ENCODE measurements at regions of chr5 and their contacts with region 1.

Region 1: DNA sequence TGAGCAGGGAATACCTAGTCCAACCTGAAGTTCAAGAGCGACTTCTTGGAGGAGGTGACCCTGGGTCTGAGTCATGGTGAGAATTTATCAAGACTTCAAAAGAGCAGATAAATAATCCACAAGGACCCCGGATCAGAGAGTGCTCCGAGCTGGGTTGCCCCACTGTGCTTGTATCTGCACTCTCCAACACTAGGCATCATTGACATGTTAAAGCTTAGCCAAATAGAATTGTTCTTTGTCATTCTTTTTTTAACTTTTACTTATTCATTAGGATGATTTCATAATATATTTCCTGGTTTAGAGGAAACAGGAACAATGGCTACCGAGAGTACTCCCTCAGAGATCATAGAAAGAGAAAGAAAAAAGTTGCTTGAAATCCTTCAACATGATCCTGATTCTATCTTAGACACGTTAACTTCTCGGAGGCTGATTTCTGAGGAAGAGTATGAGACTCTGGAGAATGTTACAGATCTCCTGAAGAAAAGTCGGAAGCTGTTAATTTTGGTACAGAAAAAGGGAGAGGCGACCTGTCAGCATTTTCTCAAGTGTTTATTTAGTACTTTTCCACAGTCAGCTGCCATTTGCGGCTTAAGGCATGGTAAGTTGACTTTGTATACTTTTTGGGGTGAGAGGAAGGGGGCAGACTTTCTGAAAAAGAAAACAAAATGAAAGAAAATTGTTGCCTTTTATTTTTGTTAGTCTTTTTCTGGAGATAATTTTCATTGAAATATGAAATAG is at the start of gene CARD6:
- DNase-seq: no peak
- H3K4me3 ChIP-seq: peak within 1 kb of the TSS; percentile 46 to 59
- H3K27ac ChIP-seq: peak within 1 kb of the TSS; percentile 45 to 68
- H3K4me1 ChIP-seq: peaks cover 0 to 2% of the 10 kb centered on the region in 2 donors
- H3K27me3 ChIP-seq: no peaks in the 10 kb centered on the region
- CTCF ChIP-seq: no peak
- total RNA-seq, gene CARD6: 8.2 TPM

Region 2: GRCh38 chr5:40866291-40866690 is 25.1 kb after region 1 on chr5:
- intact Hi-C with region 1: no loop called
- DNase-seq: no peak
- H3K4me3 ChIP-seq: no peak overlapping the region
- H3K27ac ChIP-seq: no peak overlapping the region
- H3K4me1 ChIP-seq: no peaks in the 10 kb centered on the region
- H3K27me3 ChIP-seq: no peaks in the 10 kb centered on the region
- CTCF ChIP-seq: no peak

Region 3: DNA sequence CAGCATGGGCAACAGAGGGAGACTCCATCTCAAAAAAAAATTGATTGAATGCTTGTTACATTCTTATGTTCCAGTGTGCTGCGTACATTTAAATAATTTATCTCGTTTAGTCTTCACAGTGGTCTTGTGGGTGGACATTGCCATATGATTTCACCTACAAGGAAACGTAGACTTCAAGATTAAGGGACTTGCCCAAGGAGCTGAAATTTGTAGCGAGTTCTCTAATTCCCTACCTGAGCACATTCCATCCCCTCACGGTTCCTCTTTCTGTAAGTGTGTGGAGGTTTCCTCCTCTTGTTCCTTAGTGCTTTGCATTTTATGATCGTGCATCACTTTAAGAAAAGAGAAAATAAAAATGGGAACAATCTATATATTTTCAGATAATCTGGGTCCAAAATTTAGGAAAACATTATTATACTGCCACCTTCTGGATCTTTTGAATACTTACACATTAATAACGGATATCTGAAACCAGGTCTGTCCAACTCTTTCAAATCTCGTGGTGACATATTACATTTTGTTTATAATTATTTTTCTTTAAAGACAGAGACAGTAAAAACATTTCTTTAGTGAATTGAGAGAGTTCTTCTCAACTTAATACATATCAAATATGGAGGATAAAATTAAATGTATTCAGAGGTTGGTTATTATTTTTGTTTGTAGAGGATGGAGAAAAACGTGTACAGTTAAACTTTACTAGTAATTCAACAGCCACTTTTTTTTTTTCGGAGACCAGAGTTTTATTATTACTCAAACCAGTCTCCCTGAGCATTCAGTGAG is 38.1 kb after region 1 on chr5:
- intact Hi-C with region 1: loop called (anchors 5 kb)
- DNase-seq: no peak
- H3K4me3 ChIP-seq: no peak overlapping the region
- H3K27ac ChIP-seq: no peak overlapping the region
- H3K4me1 ChIP-seq: no peaks in the 10 kb centered on the region
- H3K27me3 ChIP-seq: no peaks in the 10 kb centered on the region
- CTCF ChIP-seq: peak; percentile 21 to 56 (median 56)

Region 4: GRCh38 chr5:41414601-41415000 is 573.4 kb after region 1 on chr5:
- intact Hi-C with region 1: no loop called
- DNase-seq: no peak
- H3K4me3 ChIP-seq: no peak overlapping the region
- H3K27ac ChIP-seq: no peak overlapping the region
- H3K4me1 ChIP-seq: no peaks in the 10 kb centered on the region
- H3K27me3 ChIP-seq: no peaks in the 10 kb centered on the region
- CTCF ChIP-seq: no peak